ENCODE measurements at regions of chr7 and their contacts with region 1.

Region 1: GRCh38 chr7:56033671-56034432 is 17.4 kb downstream of the PSPH start:
- DNase-seq: peak; percentile 86
- CTCF ChIP-seq: no peak

Region 2: DNA sequence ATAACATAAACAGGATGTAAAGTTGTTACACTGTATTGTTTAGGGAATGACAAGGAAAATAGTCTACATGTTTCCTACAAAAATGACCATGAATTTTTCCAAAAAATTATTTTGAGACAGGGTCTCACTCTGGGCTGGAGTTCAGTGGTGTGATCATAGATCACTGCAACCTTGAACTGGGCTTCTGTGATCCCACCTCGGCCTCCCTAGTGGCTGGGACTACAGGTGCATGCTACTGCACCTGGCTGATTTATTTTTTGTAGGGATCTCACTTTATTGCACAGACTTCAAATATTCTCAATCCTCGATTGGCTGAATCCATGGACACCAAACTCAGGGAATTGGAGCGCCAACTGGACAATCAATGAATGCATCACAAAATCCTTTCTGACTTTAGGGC is 65.8 kb after region 1 on chr7:
- CTCF ChIA-PET with region 1: no interaction called
- POLR2A ChIA-PET with region 1: interaction called, 11 read pairs
- DNase-seq: no peak
- CTCF ChIP-seq: no peak